ENCODE measurements at regions of chr4 and their contacts with region 1.

Region 1: DNA sequence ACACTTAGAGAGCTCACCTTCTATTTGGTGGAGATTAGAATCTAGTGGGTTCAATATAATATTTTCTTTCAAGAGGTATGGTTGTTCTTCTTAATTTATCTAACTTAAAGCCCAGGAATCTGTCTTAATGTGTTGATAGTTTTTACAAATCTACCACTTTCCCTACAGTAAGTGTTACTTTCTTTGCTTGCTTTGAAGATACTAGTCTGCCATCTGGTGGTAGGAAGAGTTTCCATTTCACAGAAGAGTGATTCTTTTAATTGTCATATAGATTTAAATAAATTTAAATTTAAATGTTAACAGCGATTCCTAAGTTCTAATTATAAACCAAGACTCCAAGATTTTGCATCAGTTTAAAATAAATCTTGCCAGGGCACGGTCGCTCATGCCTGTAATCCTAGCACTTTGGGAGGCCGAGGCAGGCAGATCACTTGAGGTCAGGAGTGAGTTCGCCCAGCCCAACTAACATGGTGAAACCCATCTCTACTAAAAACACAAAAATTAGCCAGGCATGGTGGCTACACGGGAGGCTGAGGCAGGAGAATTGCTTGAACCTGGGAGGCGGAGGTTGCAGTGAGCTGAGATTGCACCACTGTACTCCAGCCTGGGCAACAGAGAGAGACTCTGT is 43.5 kb downstream of the NUDT9 start:
- DNase-seq: peak; percentile 72
- H3K4me3 Mint-ChIP-seq: no peak overlapping the region
- H3K27ac Mint-ChIP-seq: no peak overlapping the region
- H3K4me1 Mint-ChIP-seq: no peaks in the 10 kb centered on the region
- H3K27me3 Mint-ChIP-seq: no peaks in the 10 kb centered on the region

Region 2: GRCh38 chr4:87150498-87151261 is 315.2 kb before region 1 on chr4:
- intact Hi-C with region 1: loop called (anchors 2 kb)
- DNase-seq: peak; percentile 90
- H3K4me3 Mint-ChIP-seq: no peak overlapping the region
- H3K27ac Mint-ChIP-seq: no peak overlapping the region
- H3K4me1 Mint-ChIP-seq: peaks cover 3% of the 10 kb centered on the region
- H3K27me3 Mint-ChIP-seq: no peaks in the 10 kb centered on the region

Region 3: DNA sequence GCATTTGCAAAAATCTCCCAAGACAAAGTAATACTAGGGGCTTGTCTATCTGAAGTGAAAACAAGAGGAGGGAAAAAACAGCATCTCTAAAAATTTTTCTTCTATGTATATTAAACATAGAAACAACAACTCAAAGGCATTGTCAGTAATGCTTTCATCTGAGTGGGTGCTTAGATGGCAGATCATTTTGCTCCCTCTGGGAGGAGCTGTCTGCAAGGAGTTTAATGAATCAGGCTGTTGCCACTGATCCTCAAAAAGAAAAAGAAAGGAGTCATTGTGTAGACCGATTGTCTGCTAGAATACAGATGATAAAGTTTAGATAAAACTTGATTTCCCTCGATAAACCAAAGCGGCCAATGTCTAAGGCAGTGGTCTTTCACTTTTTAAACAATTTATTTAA is 195.7 kb before region 1 on chr4:
- intact Hi-C with region 1: loop called (anchors 10 kb)
- DNase-seq: no peak
- H3K4me3 Mint-ChIP-seq: no peak overlapping the region
- H3K27ac Mint-ChIP-seq: no peak overlapping the region
- H3K4me1 Mint-ChIP-seq: no peaks in the 10 kb centered on the region
- H3K27me3 Mint-ChIP-seq: peaks cover 20% of the 10 kb centered on the region

Region 4: DNA sequence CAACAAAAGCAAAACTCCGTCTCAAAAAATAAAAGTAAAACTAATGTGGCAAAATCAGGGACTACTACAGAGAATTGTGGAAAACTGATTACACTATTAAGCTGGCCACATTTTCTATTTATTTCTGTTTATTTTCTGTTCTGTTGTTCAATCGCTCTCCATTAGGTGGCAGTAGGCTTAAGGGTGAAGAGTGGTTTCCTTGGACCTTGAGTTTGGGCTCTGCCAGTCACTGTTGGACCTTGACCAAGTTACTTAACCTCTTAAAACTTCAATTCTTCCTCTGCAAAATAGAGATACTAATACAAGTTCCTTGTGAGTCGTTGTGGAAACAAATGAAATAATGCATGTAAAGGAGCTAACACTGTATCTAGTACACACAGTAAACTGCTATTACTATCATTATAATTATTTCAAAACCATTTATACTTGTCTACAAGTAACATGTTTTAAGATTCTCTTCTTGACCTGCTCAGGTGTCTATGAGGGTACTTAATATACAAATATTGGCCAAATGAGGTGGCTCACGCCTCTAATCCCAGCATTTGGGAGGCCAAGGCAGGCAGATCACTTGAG is 90.0 kb before region 1 on chr4:
- intact Hi-C with region 1: loop called (anchors 1 kb)
- DNase-seq: peak; percentile 62
- H3K4me3 Mint-ChIP-seq: no peak overlapping the region
- H3K27ac Mint-ChIP-seq: no peak overlapping the region
- H3K4me1 Mint-ChIP-seq: no peaks in the 10 kb centered on the region
- H3K27me3 Mint-ChIP-seq: no peaks in the 10 kb centered on the region

Region 5: GRCh38 chr4:87521757-87522374 is 56.0 kb after region 1 on chr4:
- intact Hi-C with region 1: no loop called
- DNase-seq: no peak
- H3K4me3 Mint-ChIP-seq: no peak overlapping the region
- H3K27ac Mint-ChIP-seq: no peak overlapping the region
- H3K4me1 Mint-ChIP-seq: no peaks in the 10 kb centered on the region
- H3K27me3 Mint-ChIP-seq: peaks cover 2% of the 10 kb centered on the region